ENCODE measurements at regions of chr22 and their contacts with region 1.

Region 1: GRCh38 chr22:29883045-29883774 is at the start of gene MTMR3:
- DNase-seq: peak; percentile 96
- ATAC-seq: peak; percentile 81
- H3K4me3 Mint-ChIP-seq: peak within 1 kb of the TSS; percentile 83; the same call in 1 of the 2 replicates
- H3K27ac Mint-ChIP-seq: peak within 1 kb of the TSS; percentile 35
- H3K4me1 Mint-ChIP-seq: peaks cover 6% of the 10 kb centered on the region
- H3K27me3 Mint-ChIP-seq: peaks cover 8% of the 10 kb centered on the region; the same call in 1 of the 2 replicates
- CTCF ChIP-seq: no peak
- total RNA-seq, gene MTMR3: 17.0 to 19.5 TPM (median 19.2 TPM) in 3 replicates

Region 2: DNA sequence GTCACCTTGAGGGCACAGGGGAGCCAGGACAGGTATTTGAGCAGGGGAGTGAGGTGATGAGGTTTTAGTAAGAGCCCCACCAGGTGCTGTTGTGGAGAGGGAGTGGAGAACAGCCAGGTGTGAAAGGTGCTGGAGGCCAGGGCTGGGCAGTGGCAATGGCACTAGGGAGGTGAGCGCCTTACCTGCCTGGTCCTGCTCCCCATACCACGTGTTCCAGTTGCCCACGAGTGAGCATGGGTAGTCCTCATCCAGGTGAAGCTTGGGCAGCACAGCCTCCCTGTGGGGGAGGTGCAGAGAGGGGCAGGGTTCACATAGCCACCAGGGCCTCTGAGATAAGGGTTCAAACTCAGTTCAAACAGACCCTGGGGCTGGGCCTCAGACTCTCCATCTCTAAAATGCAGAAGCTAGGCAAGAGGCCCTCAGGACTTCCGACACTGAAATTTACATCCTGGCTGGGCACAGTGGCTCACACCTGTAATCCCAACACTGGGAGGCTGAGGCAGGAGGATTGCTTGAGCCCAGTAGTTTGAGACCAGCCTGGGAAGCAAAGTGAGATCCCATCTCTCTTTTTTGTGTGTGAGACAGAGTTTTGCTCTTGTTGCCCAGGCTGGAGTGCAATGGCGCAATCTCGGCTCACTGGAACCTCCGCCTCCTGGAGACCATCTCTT is 314.1 kb before region 1 on chr22:
- CTCF ChIA-PET with region 1: no interaction called
- POLR2A ChIA-PET with region 1: no interaction called
- DNase-seq: no peak
- ATAC-seq: no peak
- H3K4me3 Mint-ChIP-seq: no peak overlapping the region
- H3K27ac Mint-ChIP-seq: no peak overlapping the region
- H3K4me1 Mint-ChIP-seq: no peaks in the 10 kb centered on the region
- H3K27me3 Mint-ChIP-seq: no peaks in the 10 kb centered on the region
- CTCF ChIP-seq: no peak

Region 3: GRCh38 chr22:29871684-29872083 is 11.5 kb before region 1 on chr22:
- CTCF ChIA-PET with region 1: interaction called, 10 read pairs
- POLR2A ChIA-PET with region 1: no interaction called
- DNase-seq: no peak
- ATAC-seq: peak; percentile 48
- H3K4me3 Mint-ChIP-seq: no peak overlapping the region
- H3K27ac Mint-ChIP-seq: peak overlapping the region; percentile 6; the same call in 1 of the 2 replicates
- H3K4me1 Mint-ChIP-seq: peaks cover 18% of the 10 kb centered on the region
- H3K27me3 Mint-ChIP-seq: no peaks in the 10 kb centered on the region
- CTCF ChIP-seq: no peak